ENCODE measurements at regions of chr1 and their contacts with region 1.

Region 1: DNA sequence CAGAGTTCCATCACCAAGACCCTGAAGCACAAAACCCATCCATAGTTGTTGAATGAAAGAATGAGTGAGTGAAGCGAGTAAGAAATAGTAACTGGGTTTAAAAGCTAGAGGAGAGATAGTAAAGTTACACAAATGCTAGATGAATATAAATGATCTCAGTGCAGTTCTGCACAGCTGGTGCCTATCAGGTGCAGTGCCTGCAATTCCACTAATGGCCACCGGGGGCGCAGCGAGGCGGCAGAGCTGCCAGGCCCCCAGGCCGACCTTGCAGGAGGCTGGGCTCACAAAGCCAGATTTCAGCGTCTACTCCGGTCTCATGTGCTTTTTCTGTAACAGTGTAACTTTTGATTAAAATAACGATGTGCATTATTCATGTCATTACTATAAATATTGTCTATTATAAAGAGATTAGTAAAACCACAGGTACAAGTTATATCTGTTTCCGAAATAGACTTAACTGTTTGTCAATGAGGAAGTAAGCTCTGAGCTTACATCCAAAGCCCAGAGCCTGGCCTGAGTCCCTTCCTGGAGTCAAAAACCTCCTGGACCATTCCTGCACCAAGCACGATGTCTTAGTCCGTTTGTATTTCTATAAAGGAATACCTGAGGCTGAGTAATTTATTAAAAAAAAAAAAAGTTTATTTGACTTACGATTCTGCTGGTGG is 477.6 kb downstream of the NPHP4 start:
- DNase-seq: peak in 9 of 10 donors; percentile 64 to 85 (median 73)
- H3K4me3 ChIP-seq: no peak overlapping the region
- H3K27ac ChIP-seq: no peak overlapping the region
- H3K27me3 ChIP-seq: no peaks in the 10 kb centered on the region
- CTCF ChIP-seq: peak; percentile 97 to 100 (median 99)

Region 2: DNA sequence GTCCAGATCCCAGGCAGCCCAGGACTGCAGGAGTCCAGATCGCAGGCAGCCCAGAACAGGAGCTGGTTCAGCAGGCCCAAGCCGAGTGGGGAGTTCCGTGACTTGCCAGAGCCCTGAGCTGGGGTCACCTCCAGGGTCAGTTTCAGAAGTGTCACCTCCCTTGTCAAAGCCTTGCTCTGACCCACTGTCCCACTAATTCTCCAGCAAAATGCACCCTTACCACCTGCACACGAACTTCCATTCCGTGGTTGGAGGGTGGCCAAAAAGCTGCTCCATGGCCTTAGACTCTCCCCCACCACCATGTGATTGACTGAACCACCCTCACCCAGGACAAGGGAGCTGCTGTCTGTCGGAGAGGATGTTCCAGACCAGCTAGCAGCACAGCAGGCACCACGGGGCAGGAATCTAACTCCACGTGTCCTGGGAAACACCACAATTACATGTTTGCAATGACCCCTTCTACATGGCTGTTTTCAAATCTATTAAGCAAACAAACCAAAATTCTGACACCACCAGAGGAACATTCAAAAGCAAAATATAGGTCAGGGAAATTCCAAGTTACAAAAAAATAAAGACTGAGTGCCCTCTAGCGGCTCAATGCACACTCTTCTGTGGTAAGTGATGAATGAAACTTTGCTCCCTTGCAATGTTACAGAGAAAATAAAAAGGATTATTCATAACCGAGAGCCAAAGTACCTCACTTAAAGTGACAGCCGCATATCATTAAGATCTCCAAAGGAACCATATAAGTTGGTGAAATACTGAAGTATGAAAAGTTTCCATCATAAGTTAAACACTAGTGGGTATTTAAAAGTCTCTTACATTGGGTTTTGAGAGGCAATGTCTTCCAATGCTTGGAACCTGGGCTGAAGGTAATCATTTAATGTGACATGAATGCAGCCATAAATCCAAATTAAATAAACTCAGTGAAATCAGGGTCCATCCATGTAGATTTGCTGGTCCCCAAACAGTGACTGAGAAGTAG is 401.2 kb after region 1 on chr1:
- intact Hi-C with region 1: loop called (anchors 5 to 10 kb)
- DNase-seq: peak in 3 of 10 donors; percentile 38 to 58 (median 51)
- H3K4me3 ChIP-seq: no peak overlapping the region
- H3K27ac ChIP-seq: peak overlapping the region in 52 of 59 donors; percentile 1 to 83 (median 61)
- H3K27me3 ChIP-seq: no peaks in the 10 kb centered on the region
- CTCF ChIP-seq: peak; percentile 63 to 88 (median 80)

Region 3: GRCh38 chr1:6094801-6095505 is 580.3 kb after region 1 on chr1:
- intact Hi-C with region 1: no loop called
- DNase-seq: peak in 1 of 10 donors; percentile 33
- H3K4me3 ChIP-seq: no peak overlapping the region
- H3K27ac ChIP-seq: peak overlapping the region in 6 of 59 donors; percentile 1 to 62 (median 17)
- H3K27me3 ChIP-seq: peaks cover 0 to 2% (median 0%) of the 10 kb centered on the region in 45 donors
- CTCF ChIP-seq: no peak

Measured in dorsolateral prefrontal cortex (tissue), 120 donors.